ENCODE measurements at regions of chr1 and their contacts with region 1.

Region 1: GRCh38 chr1:172357753-172358385 is 62.6 kb upstream of the C1orf105 start:
- DNase-seq: peak; percentile 76
- H3K4me3 ChIP-seq: peak overlapping the region in 1 of 3 experiments; percentile 36
- H3K27ac ChIP-seq: peak overlapping the region; percentile 95
- H3K4me1 ChIP-seq: peaks cover 48% of the 10 kb centered on the region
- H3K27me3 ChIP-seq: no peaks in the 10 kb centered on the region
- CTCF ChIP-seq: no peak
- POLR2A ChIP-seq: no peak

Region 2: DNA sequence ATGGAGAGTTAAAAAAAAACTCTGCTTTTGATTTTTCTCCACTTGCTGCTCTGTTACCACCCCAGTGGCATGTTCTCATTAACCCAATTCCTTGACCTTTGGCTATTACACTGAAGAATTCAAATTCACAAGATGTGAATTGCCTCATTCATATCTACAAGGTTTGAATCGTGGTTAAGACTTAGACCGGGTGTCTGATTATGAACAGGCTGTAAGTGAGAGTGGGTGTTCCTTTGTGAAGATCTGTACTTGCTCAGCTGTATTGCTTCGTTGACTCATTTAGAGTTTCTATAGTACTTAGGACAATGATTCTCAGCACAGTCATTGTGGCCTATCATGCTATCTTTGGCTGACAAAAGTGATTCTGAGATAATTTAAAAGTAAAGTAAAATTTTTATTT is 480.2 kb before region 1 on chr1:
- CTCF ChIA-PET with region 1: no interaction called
- POLR2A ChIA-PET with region 1: no interaction called
- dilution Hi-C with region 1: no loop called
- intact Hi-C with region 1: no loop called
- DNase-seq: no peak
- H3K4me3 ChIP-seq: no peak overlapping the region
- H3K27ac ChIP-seq: no peak overlapping the region
- H3K4me1 ChIP-seq: no peaks in the 10 kb centered on the region
- H3K27me3 ChIP-seq: no peaks in the 10 kb centered on the region
- CTCF ChIP-seq: no peak
- POLR2A ChIP-seq: no peak

Region 3: DNA sequence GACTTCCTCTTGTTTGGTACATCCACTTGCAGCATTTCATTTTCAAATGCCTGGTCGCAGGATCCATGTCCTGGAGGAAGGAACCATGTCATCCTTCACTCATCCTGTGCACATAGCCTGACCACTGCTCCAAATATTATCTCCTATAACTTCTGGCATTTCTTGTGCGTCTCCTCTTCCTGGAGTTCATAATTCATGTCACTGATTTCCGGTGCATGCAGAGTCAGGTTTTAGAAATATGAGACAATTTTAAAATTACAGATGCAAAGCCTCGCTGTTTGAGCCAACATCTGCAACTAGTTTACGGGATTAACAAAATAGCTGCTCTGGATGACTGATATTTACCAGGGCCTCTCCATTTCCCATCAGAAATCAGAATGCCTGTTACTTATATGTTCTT is 248.5 kb before region 1 on chr1:
- CTCF ChIA-PET with region 1: no interaction called
- POLR2A ChIA-PET with region 1: no interaction called
- dilution Hi-C with region 1: no loop called
- intact Hi-C with region 1: loop called (anchors 1 kb)
- DNase-seq: peak; percentile 66
- H3K4me3 ChIP-seq: no peak overlapping the region
- H3K27ac ChIP-seq: peak overlapping the region; percentile 28
- H3K4me1 ChIP-seq: peaks cover 48% of the 10 kb centered on the region
- H3K27me3 ChIP-seq: no peaks in the 10 kb centered on the region
- CTCF ChIP-seq: no peak
- POLR2A ChIP-seq: no peak

Region 4: GRCh38 chr1:172180501-172181285 is 177.2 kb before region 1 on chr1:
- CTCF ChIA-PET with region 1: interaction called, 6 read pairs
- POLR2A ChIA-PET with region 1: no interaction called
- dilution Hi-C with region 1: no loop called
- intact Hi-C with region 1: loop called (anchors 1 kb)
- DNase-seq: peak; percentile 75
- H3K4me3 ChIP-seq: peak overlapping the region in 1 of 3 experiments; percentile 58
- H3K27ac ChIP-seq: peak overlapping the region; percentile 46
- H3K4me1 ChIP-seq: peaks cover 11% of the 10 kb centered on the region
- H3K27me3 ChIP-seq: no peaks in the 10 kb centered on the region
- CTCF ChIP-seq: no peak
- POLR2A ChIP-seq: no peak

Region 5: GRCh38 chr1:172343240-172344160 is 14.4 kb before region 1 on chr1:
- CTCF ChIA-PET with region 1: interaction called, 28 read pairs
- POLR2A ChIA-PET with region 1: interaction called, 7 read pairs
- dilution Hi-C with region 1: no loop called
- intact Hi-C with region 1: loop called (anchors 1 kb)
- DNase-seq: peak; percentile 86
- H3K4me3 ChIP-seq: peak overlapping the region in 1 of 3 experiments; percentile 32
- H3K27ac ChIP-seq: peak overlapping the region; percentile 99
- H3K4me1 ChIP-seq: peaks cover 26% of the 10 kb centered on the region
- H3K27me3 ChIP-seq: no peaks in the 10 kb centered on the region
- CTCF ChIP-seq: no peak
- POLR2A ChIP-seq: no peak

Region 6: DNA sequence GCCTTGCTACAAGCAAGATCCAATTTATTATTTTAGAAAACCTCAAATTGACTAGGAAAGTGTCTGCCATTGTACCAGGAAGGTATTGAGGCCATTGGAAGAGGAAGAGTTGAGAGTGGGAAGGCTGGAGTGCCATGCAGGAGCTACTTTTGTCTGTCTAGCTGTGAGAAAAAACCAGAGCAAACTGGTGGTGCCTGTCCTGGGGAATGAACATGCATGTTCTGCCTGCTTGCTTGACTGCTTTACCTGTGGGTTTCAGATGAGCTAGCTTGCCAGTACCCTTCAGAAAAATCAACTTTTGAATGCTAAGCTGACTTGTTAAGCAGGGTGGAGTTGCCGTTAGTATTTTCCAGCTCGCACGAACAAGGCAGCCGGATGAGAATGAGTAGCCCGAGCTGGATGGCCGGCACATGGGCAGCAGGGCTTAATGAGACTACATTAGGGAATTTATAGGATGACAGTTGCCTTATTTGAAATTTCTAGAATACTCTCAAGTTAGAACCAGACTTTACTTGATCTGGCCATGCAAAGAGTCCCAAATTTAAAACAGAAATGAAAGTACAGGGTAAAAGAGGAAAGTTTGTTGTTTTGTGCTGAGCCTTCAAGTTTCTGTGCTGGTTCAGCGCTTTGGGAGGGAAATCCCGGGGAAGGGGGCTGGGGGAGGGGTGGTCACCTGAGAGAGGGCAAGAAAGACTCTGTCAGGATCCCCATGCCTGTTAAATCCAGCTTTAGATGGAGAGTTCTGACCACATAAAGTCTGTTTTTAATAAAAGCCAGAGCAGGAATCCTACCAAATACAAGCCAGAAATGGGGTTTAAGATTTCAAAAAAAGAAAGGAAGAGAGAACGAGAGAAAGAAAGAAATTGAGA is 33.0 kb after region 1 on chr1:
- CTCF ChIA-PET with region 1: interaction called, 4 read pairs
- POLR2A ChIA-PET with region 1: no interaction called
- dilution Hi-C with region 1: no loop called
- intact Hi-C with region 1: loop called (anchors 1 kb)
- DNase-seq: peak; percentile 28
- H3K4me3 ChIP-seq: no peak overlapping the region
- H3K27ac ChIP-seq: no peak overlapping the region
- H3K4me1 ChIP-seq: peaks cover 8% of the 10 kb centered on the region
- H3K27me3 ChIP-seq: no peaks in the 10 kb centered on the region
- CTCF ChIP-seq: no peak
- POLR2A ChIP-seq: no peak